ENCODE measurements at regions of chr14 and their contacts with region 1.

Region 1: DNA sequence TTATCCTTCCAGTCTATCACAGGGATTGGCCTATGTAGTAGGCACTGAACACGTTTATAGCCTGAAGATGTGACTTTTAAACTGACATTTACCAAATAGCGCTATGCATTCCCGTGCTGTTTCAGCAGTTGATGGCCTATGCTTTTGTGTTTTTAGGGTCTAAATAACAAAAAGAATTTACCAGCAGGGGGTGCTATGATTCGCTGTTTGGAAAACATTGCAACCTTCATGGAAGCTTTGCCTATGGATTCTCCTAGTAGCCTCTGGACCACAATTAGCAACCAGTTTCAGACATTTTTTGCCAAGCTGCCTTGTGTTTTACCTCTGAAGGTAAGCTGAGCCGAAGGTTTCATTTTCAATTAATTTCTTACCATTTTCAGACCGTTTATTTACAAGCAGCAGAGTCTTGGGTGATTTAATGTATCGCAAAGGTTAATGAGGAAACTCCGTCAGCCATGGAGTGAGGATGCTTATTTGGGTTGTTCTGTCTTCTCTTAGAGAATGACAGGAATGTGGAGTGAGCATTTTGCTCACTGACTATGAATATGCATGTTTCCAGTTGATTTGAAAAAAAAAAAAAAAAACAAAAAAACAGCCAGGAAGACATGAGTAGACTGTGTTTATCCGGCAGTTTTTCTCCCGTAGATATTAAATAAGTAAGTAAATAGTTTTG is 133.1 kb downstream of the PRIMA1 start:
- DNase-seq: peak; percentile 36
- CTCF ChIP-seq: peak; percentile 40

Region 2: GRCh38 chr14:93645200-93645599 is 10.0 kb before region 1 on chr14:
- CTCF ChIA-PET with region 1: interaction called, 21 read pairs
- POLR2A ChIA-PET with region 1: no interaction called
- DNase-seq: no peak
- CTCF ChIP-seq: no peak

Region 3: DNA sequence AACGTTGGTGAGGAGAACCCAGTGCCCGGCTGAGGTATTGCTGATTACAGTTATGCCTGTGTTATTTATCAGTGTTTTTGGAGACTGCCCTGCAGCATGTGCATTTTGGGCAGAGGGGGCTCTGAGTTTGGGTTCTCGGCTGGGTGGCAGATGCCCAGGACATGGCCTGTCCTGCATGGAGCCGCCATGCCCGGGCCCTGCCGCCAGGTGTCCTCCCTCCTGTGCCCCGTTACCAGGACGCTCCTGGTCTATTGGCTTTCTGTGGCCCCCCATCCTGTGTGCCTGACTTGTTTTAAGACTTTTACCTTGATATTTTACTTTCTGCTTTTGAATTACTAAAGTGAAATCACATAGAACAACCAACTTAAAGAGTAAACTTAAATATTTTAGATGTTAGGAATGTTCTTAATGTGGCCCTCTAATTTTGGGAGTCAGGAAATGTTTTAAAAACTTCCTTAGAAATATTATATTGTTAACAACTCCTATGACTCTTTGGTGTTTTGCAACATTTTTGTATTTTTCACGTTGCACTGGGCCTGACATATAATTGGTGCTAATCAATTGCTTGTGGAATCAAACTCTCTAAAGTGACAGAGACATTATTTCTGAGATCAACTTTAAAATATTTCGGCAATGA is 81.3 kb after region 1 on chr14:
- CTCF ChIA-PET with region 1: no interaction called
- POLR2A ChIA-PET with region 1: no interaction called
- DNase-seq: no peak
- CTCF ChIP-seq: peak; percentile 27

Region 4: GRCh38 chr14:93892923-93893558 is 237.8 kb after region 1 on chr14:
- CTCF ChIA-PET with region 1: interaction called, 22 read pairs
- POLR2A ChIA-PET with region 1: no interaction called
- DNase-seq: peak; percentile 81
- CTCF ChIP-seq: peak; percentile 91

Region 5: DNA sequence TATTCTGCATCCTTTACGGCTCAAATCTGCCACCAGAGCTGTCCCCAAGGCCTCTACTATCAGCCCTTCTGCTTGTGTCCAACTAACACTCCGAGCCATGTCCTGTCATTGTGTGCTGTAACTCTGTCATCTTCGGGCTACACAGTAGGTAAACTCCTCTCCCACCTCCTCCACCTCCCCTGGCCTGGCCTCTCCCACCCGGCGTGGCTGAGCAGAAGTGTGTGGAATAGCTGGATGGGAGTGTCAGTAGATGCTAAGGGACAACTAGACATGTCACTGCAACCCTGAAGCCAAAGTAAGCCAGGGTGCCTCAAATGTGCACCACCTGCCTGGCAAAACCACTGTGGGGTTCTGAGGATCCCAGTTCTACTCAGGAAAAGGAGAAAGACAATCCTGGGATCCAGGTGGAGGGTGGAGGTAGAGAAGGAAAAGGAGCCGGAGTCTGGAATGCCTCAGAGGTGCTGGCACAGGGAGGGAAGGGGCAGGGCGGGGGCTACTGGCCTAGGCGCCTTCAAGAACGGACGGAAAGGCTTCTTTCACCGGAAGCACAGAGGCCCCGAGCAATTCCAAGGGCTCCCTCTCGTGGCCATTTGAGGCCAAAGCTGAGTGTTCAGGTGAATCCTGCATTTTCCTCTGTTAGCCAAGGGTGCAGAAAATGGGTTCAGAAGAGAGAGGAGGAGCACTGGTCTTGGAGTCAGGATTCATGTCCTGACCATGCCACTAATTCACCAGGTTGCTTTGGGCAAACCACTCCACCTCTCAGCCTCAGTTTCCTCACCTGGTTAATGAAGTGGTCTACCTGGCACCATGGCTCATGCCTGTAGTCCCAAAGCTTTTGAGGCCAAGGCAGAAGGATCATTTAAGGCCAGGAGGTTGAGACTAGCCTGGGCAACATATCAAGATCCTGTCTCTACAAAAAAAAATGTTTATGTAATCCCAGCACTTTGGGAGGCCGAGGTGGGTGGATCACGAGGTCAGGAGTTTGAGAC is 251.4 kb after region 1 on chr14:
- CTCF ChIA-PET with region 1: interaction called, 42 read pairs
- POLR2A ChIA-PET with region 1: no interaction called
- DNase-seq: peak; percentile 86
- CTCF ChIP-seq: peak; percentile 81